ENCODE measurements at regions of chr2 and their contacts with region 1.

Region 1: DNA sequence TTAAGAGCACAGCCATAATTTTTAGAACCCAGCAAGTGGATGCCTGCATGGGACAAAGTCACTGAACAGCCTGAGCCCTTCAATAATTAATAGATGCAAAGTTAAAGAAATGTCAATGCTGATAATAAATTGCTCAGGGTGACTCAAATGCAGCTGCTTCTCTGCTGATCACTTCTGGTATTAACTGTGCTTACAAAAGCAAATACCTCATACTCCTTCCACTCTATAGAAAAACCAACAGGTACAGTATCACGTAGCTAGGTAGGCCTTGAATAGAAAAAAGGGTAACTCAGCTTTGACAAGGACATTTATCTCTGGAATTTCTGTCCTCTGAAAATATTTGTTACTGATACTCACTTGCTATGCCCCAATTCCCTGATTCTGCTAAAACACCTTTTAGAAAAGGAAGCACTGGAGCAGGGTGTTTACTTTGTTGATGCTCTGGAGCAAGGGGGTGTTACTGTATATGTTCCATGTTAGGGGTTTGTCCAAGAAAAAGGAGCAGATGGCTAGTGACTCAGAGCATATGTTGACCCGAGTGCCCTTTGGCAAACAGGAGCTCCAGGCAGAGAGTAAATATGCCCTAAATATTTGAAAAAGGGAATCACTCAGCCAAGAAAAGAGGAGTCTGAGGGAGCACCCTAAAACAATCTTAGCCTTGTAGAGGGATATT is 59.1 kb upstream of the RTN4 start:
- DNase-seq: no peak
- H3K4me3 ChIP-seq: no peak overlapping the region
- H3K27ac ChIP-seq: no peak overlapping the region
- H3K4me1 ChIP-seq: peaks cover 25% of the 10 kb centered on the region
- H3K27me3 ChIP-seq: no peaks in the 10 kb centered on the region
- CTCF ChIP-seq: no peak

Region 2: GRCh38 chr2:55050133-55050994 is 59.0 kb before region 1 on chr2 and contains the start of gene RTN4:
- intact Hi-C with region 1: loop called (anchors 10 kb)
- DNase-seq: peak; percentile 98
- H3K4me3 ChIP-seq: peak within 1 kb of the TSS; percentile 92
- H3K27ac ChIP-seq: peak within 1 kb of the TSS; percentile 97
- H3K4me1 ChIP-seq: peaks cover 59% of the 10 kb centered on the region
- H3K27me3 ChIP-seq: no peaks in the 10 kb centered on the region
- CTCF ChIP-seq: no peak
- total RNA-seq, gene RTN4: 105 TPM

Region 3: DNA sequence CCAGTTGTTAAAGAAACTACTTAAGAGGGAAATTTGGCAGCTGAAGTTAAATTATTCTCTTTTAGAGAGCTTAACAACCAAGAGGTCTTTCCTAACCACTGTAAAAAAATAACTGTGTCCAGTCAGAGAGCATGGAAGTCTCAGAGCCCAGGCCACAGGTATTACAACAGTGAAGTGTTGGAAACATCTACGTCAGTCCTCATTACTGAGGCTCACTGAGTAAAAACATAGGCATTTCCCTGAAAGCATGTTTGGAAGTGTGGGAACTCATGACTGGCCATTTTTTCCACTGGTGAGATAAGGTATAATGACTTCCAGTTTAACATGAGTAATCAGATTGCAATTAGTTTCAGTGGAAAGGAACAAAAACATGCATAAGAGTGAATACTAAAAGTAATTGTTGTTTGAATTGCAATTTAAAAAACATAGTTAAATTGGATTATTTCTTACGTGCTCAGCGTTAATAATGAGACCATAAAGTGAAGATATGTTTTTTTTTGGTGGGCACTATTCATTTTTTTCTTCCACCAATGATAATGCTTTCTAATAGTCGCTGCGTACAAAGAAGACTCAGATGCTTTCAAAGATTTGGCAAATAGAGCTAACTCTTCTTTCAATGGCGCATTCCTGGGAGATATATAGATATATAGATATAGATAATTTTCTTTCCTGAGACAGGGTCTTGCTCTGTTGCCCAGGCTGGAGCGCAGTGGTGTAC is 753.5 kb after region 1 on chr2:
- intact Hi-C with region 1: no loop called
- DNase-seq: no peak
- H3K4me3 ChIP-seq: no peak overlapping the region
- H3K27ac ChIP-seq: peak overlapping the region; percentile 66
- H3K4me1 ChIP-seq: peaks cover 14% of the 10 kb centered on the region
- H3K27me3 ChIP-seq: no peaks in the 10 kb centered on the region
- CTCF ChIP-seq: no peak

Region 4: DNA sequence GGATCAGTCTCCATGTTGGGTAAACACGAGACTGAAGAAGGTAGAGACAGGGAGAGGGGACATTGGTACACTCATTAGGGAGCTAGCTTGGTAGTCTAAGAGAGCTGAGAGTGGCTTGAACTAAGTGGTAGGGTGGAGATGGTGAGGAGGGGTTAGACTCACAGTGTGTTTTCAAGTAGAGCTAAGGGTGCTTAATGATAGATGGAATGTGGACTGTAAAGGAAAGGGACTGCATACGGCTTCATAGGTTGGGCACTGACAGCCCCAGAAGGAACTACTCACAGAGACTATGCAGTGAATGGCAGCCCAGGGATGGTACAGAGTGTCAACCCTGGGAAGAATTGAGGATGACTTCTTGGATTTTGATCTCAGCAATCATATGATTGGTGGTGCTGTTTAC is 1252.5 kb after region 1 on chr2:
- intact Hi-C with region 1: no loop called
- DNase-seq: no peak
- H3K4me3 ChIP-seq: no peak overlapping the region
- H3K27ac ChIP-seq: no peak overlapping the region
- H3K4me1 ChIP-seq: no peaks in the 10 kb centered on the region
- H3K27me3 ChIP-seq: no peaks in the 10 kb centered on the region
- CTCF ChIP-seq: no peak

Measured in left ventricle myocardium inferior (tissue), 1 donor.